ENCODE measurements at regions of chr1 and their contacts with region 1.

Region 1: DNA sequence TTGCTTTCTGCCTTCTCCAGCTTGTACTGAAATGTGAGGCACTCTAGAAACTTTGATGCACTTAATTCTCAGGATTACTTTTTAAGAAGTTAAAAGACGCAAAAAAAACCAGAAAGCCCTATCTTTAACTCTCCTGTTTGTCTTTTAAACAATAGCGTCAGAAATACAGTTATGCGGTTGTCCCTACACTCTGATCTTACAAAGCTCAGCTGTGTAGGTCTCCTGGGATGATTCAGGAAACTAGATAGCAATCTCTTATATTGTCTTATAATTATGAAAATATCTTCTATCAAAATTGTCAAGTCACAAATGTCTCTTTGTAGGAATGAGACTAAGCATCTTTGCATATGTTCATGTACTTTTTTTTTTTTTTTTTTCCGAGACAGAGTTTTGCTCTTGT is 26.9 kb upstream of the RCAN3 start:
- DNase-seq: no peak
- ATAC-seq: peak in 2 of 4 donors; percentile 39 to 84
- H3K4me3 ChIP-seq: no peak overlapping the region
- H3K27ac ChIP-seq: no peak overlapping the region
- H3K4me1 ChIP-seq: peaks cover 0 to 2% (median 0%) of the 10 kb centered on the region in 12 donors
- H3K27me3 ChIP-seq: no peaks in the 10 kb centered on the region
- CTCF ChIP-seq: no peak
- POLR2A ChIP-seq: no peak

Region 2: GRCh38 chr1:24438423-24438901 is 37.2 kb before region 1 on chr1:
- intact Hi-C with region 1: loop called in 1 of 10 experiments (anchors 5 kb)
- DNase-seq: peak; percentile 47 to 78 (median 69)
- ATAC-seq: peak; percentile 78 to 88 (median 84)
- H3K4me3 ChIP-seq: peak overlapping the region in 1 of 12 donors; percentile 8
- H3K27ac ChIP-seq: peak overlapping the region in 11 of 12 donors; percentile 6 to 62 (median 49)
- H3K4me1 ChIP-seq: peaks cover 0 to 33% (median 10%) of the 10 kb centered on the region in 12 donors
- H3K27me3 ChIP-seq: no peaks in the 10 kb centered on the region
- CTCF ChIP-seq: no peak
- POLR2A ChIP-seq: no peak

Region 3: DNA sequence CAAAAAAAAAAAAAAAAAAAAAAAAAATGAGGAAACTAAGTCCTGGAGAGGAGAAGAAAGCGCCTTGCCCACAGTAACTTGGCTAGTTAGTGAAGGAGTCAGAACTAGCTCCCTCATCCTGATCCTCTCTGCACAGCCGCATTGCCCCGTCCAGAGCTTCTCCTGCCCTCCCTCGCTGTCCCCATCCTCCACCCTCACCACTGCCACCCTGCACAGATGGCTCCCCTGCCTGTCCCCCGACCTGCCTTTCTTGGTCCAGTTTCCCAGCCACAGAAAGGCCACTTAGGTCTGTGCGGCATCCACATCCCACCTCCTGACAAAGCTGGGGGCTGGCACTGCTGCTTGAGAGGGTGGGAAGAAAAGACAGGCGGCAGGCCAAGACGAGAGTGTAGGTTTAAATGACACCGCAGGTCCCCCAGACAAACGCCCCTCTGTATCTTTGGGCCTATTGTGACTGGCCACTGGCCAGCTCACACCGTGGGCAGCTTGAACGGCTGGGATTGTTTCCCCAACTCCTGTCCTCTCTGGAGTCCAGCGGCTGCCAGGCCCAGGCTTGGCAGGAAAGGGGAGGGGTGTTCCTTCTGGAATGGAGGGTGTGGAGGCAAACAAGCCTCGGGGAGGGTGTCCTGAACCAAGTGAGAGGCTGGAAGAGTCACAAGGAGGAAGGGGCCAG is 100.4 kb after region 1 on chr1:
- intact Hi-C with region 1: no loop called
- DNase-seq: no peak
- ATAC-seq: no peak
- H3K4me3 ChIP-seq: no peak overlapping the region
- H3K27ac ChIP-seq: no peak overlapping the region
- H3K4me1 ChIP-seq: no peaks in the 10 kb centered on the region
- H3K27me3 ChIP-seq: no peaks in the 10 kb centered on the region
- CTCF ChIP-seq: no peak
- POLR2A ChIP-seq: no peak

Measured in heart left ventricle (tissue), 16 donors.